Endothelial cell of umbilical vein (primary cell): ENCODE measurements at regions of chr2 and their contacts with region 1.

Region 1: GRCh38 chr2:84925724-84926376 is 20.4 kb downstream of the TMSB10 start:
- DNase-seq: peak; percentile 87
- H3K4me3 ChIP-seq: peak overlapping the region in 1 of 3 experiments; percentile 1
- H3K27ac ChIP-seq: no peak overlapping the region
- H3K4me1 ChIP-seq: peaks cover 26% of the 10 kb centered on the region
- H3K27me3 ChIP-seq: no peaks in the 10 kb centered on the region
- CTCF ChIP-seq: peak; percentile 94 to 98
- POLR2A ChIP-seq: no peak

Region 2: DNA sequence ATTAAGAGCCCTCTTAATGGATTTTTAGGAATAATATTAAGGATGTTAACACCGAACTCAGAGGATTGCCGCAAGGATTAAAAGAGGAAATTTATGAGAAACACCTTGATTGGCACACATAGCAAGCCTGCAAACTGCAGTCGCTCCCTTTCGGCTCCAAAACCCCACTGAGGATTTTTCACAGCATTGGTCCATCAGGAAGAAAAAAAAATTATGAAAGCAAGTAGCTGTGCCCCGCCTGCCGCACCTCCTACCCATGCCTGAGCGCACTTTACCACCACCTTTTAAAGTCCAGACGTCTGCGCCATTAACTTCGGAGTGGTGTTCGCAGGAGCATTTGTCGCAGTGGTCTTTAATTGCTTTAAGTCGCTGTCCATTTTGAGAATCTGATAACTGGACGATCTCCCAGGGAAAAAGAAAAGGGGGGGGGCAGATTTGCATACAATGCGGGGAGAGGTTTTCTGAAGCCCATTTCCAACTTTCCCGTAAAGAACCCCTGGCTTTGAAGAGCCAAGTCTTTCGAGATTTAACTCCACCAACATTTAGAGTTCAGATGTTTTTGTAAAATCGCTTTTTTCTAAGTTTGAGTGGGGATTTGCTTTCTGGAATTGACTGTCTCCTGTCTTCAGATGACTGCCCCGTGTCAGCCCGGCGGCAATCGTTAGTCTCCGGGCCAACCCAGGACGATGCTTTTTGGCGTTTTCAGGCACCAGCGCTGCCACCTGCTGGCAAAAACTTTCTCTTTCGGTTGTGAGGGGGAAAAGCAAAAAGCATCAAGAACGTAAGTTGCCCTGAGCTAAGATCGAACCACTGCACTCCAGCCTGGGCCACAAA is 44.1 kb before region 1 on chr2:
- CTCF ChIA-PET with region 1: interaction called, 23 read pairs
- POLR2A ChIA-PET with region 1: no interaction called
- dilution Hi-C with region 1: no loop called
- intact Hi-C with region 1: loop called (anchors 1 kb)
- DNase-seq: peak; percentile 82
- H3K4me3 ChIP-seq: peak overlapping the region; percentile 3 to 69 (median 15)
- H3K27ac ChIP-seq: no peak overlapping the region
- H3K4me1 ChIP-seq: peaks cover 16% of the 10 kb centered on the region
- H3K27me3 ChIP-seq: peaks cover 41% of the 10 kb centered on the region in 2 experiments
- CTCF ChIP-seq: peak; percentile 72 to 76
- POLR2A ChIP-seq: no peak

Region 3: DNA sequence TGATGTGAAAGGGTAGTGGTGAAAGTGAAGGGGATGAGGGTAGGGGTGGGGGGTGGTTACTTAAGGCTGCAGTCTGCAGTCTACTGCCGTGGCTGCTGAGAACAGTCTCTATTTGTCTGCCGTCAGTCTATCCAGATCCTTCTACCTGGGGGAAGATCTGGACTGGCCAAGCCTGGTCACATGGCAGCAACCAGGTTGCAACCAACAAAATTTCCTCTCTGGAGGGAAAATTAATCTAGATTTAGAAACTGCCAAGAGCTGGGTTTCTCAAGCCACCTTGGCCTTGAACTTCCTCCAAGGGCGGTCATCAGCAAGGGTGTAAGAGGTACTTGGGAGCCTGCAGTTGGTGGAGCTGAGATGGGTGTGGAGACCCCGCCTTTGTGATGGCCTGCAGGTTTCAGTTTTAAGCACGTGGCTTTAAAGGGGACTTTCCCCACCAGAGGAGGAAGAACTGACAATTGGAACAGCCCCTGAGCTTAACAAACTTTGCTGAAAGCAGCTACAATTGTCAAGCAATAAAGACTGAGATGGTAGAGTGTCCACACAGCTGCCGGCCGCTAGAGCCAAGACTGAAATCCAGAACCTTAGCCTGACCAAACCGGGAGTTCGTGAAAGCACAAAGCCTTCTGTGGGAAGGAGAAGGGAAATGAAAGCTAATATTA is 13.7 kb after region 1 on chr2:
- CTCF ChIA-PET with region 1: interaction called, 32 read pairs
- POLR2A ChIA-PET with region 1: no interaction called
- dilution Hi-C with region 1: no loop called
- intact Hi-C with region 1: no loop called
- DNase-seq: no peak
- H3K4me3 ChIP-seq: no peak overlapping the region
- H3K27ac ChIP-seq: no peak overlapping the region
- H3K4me1 ChIP-seq: peaks cover 3% of the 10 kb centered on the region
- H3K27me3 ChIP-seq: no peaks in the 10 kb centered on the region
- CTCF ChIP-seq: no peak
- POLR2A ChIP-seq: no peak

Region 4: GRCh38 chr2:84970868-84971509 is 45.1 kb after region 1 on chr2 and contains the start of gene KCMF1:
- CTCF ChIA-PET with region 1: interaction called, 35 read pairs
- POLR2A ChIA-PET with region 1: interaction called, 5 read pairs
- dilution Hi-C with region 1: no loop called
- intact Hi-C with region 1: loop called (anchors 1 kb)
- DNase-seq: peak; percentile 30
- H3K4me3 ChIP-seq: peak within 1 kb of the TSS; percentile 92 to 98 (median 97)
- H3K27ac ChIP-seq: peak within 1 kb of the TSS; percentile 96
- H3K4me1 ChIP-seq: peaks cover 18% of the 10 kb centered on the region
- H3K27me3 ChIP-seq: no peaks in the 10 kb centered on the region
- CTCF ChIP-seq: no peak
- POLR2A ChIP-seq: no peak
- total RNA-seq, gene KCMF1: 75.9 and 78.4 TPM in 2 replicates

Region 5: DNA sequence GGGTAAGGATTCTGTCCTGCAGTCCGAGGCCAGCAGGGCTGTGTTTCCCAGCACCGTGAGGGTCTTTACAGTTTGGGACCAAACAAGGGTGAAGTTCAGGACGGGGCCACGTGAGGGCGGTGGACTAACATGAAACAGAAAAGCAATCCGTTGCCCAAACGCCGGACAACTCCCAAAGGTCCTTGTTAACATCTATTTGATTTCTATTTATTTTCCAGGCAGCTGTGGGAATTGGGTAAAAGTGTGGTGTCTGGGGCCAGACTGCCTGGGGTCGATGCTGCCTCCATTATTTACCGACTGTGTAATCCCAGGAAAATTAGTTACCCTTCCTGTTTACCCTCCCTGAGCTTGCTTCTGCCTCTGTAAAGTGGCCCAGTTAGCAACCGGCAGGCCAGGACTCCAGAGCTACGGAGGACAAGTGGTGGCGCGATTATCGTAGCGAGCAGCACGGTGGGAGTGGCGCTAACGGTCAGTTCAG is 141.1 kb after region 1 on chr2:
- CTCF ChIA-PET with region 1: interaction called, 19 read pairs
- POLR2A ChIA-PET with region 1: no interaction called
- dilution Hi-C with region 1: no loop called
- intact Hi-C with region 1: loop called (anchors 5 kb)
- DNase-seq: peak; percentile 83
- H3K4me3 ChIP-seq: peak overlapping the region in 1 of 3 experiments; percentile 24
- H3K27ac ChIP-seq: no peak overlapping the region
- H3K4me1 ChIP-seq: no peaks in the 10 kb centered on the region
- H3K27me3 ChIP-seq: peaks cover 4 to 7% of the 10 kb centered on the region in 2 experiments
- CTCF ChIP-seq: peak; percentile 76 to 80
- POLR2A ChIP-seq: no peak